ENCODE measurements at regions of chr2 and their contacts with region 1.

Region 1: DNA sequence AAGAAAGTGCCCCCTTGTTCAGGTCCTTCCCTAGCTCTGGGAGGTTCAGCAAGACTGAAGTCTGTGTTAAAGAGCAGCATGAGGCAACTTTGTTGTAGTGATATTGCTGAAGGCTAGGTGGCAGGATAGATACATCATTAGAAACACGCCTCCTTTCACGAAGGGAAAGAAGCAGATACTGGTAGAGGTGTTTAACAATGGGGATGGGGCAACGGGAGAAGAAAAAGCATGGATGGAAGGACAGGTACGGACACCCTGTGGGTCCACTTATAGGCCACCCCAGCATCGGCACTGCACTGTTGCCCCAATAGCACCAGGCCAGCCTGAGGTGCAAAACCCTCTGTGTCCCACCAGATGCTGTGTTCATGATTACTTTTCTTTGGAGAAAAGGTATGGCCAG is 3.5 kb upstream of the IGFBP5 start:
- DNase-seq: peak; percentile 49
- H3K4me3 ChIP-seq: no peak overlapping the region
- H3K27ac ChIP-seq: no peak overlapping the region
- H3K4me1 ChIP-seq: peaks cover 14% of the 10 kb centered on the region
- H3K27me3 ChIP-seq: peaks cover 4% of the 10 kb centered on the region
- CTCF ChIP-seq: peak; percentile 77 to 83

Region 2: DNA sequence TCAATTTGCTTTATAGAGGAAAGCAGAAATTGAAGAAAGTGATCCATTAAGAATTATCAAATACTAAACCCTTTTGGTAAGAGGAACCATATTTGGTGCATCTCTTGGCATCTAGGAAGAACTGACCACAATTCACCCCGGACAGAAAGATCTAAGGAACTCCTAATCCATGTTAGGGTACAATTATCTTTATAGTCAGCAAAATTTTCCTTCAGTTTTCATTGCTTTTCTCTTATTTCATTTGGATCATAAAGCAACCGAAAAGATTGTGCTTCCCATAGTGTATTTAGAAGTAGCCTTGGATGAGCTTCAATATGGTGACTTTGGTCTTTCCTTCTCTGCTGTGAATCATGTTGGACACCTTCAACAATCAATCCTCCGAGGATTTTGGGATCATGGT is 46.6 kb after region 1 on chr2:
- CTCF ChIA-PET with region 1: no interaction called
- dilution Hi-C with region 1: no loop called
- in situ Hi-C with region 1: no loop called
- intact Hi-C with region 1: loop called (anchors 1 kb)
- DNase-seq: no peak
- H3K4me3 ChIP-seq: no peak overlapping the region
- H3K27ac ChIP-seq: no peak overlapping the region
- H3K4me1 ChIP-seq: peaks cover 3% of the 10 kb centered on the region
- H3K27me3 ChIP-seq: peaks cover 2% of the 10 kb centered on the region
- CTCF ChIP-seq: no peak

Region 3: DNA sequence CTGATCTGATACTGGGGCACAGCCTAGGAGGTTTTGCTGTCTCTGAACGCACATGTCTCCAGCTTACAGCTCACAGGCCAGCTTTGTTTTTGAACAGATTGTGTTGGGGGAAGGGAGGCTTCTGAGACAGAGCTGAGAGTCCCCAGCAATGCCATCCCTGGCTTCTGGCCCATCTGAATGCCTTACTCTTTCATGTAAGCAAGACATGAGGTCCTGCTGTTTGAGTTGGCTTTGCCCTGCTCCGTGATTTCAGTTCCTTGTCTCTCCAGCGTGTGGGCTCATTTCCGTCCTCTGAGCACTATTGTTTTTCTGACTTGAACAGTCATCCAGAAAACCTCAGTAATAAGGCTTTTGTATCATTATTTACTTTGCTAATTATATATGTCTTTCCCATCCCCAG is 355.9 kb after region 1 on chr2:
- CTCF ChIA-PET with region 1: no interaction called
- dilution Hi-C with region 1: no loop called
- in situ Hi-C with region 1: no loop called
- intact Hi-C with region 1: loop called (anchors 5 kb)
- DNase-seq: no peak
- H3K4me3 ChIP-seq: no peak overlapping the region
- H3K27ac ChIP-seq: no peak overlapping the region
- H3K4me1 ChIP-seq: no peaks in the 10 kb centered on the region
- H3K27me3 ChIP-seq: no peaks in the 10 kb centered on the region
- CTCF ChIP-seq: no peak

Region 4: DNA sequence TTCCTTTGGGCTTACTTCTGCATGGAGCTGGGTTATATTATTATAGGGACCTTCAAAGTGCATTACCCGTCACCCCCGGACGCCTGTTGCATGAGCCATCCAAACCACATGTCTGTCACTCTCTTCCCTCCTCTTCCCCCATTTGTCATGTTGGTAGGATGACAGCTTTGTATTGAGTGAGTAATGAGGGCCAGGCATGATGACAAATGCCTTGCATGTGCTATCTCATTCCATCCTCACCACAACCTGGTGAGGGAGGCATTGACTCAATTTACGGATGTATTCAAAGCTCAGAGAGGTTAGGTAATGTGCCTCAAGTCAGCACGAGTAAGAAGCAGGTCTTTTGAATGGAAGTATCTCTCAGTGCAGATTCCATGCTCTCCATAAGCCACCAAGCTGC is 671.5 kb after region 1 on chr2:
- CTCF ChIA-PET with region 1: no interaction called
- dilution Hi-C with region 1: no loop called
- in situ Hi-C with region 1: no loop called
- intact Hi-C with region 1: loop called (anchors 5 kb)
- DNase-seq: peak; percentile 96
- H3K4me3 ChIP-seq: no peak overlapping the region
- H3K27ac ChIP-seq: no peak overlapping the region
- H3K4me1 ChIP-seq: peaks cover 37% of the 10 kb centered on the region
- H3K27me3 ChIP-seq: no peaks in the 10 kb centered on the region
- CTCF ChIP-seq: peak; percentile 16 to 51

Region 5: DNA sequence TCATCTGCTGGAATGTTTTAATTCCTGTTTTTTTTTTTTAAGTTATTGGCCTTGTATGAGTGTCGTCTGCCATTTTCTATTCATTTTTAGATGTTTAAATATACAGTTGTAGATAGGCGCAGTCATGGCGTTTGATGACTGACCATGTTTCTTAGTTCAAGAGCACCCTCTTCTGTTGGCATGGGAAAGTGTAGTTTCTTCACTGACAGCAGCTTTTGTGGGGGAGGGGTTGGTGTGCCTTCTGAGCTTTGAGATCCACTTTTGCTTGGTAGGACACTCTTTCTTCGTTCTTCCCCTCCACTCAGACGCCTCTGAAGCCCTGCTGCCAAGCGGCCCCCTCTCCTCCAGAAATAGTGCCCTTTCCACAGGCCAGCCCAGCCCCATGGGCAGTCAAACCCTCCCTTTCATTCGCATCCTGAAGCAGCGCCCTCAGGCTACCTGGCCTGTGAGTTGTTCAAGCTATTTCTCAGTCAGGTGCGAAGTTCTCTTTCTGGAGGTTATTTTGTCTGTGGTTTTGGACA is 811.9 kb after region 1 on chr2:
- CTCF ChIA-PET with region 1: interaction called, 3 read pairs
- dilution Hi-C with region 1: loop called (anchors 10 kb)
- in situ Hi-C with region 1: loop called (anchors 10 kb)
- intact Hi-C with region 1: loop called (anchors 1 kb)
- DNase-seq: peak; percentile 68
- H3K4me3 ChIP-seq: no peak overlapping the region
- H3K27ac ChIP-seq: no peak overlapping the region
- H3K4me1 ChIP-seq: peaks cover 5% of the 10 kb centered on the region
- H3K27me3 ChIP-seq: no peaks in the 10 kb centered on the region
- CTCF ChIP-seq: peak; percentile 64 to 79

Measured in mammary epithelial cell (primary cell).